HCT116 (cell line): ENCODE measurements at regions of chr9 and their contacts with region 1.

Region 1: DNA sequence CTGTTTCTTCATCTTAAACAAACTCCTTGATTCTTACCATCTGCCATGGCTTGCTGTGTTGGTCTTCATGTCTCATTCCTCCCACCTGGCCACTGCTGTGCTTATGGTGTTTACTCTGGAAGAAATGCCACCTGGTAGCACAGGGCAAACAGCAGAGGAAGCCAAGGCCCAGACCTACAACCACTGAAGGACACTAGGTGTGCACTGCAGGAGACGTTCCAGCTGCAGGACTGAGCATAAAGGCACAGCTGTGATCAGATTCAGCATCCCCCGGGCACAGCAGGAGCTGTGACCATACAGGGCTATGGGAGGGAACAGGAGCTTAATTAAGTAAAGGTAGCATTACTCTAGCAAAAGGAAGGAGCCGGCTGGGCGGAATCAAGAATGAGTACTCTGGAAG is 12.6 kb upstream of the GNAQ start:
- DNase-seq: no peak
- ATAC-seq: no peak
- H3K4me3 ChIP-seq: no peak overlapping the region
- H3K27ac ChIP-seq: no peak overlapping the region
- H3K4me1 ChIP-seq: no peaks in the 10 kb centered on the region
- H3K27me3 ChIP-seq: peaks cover 10% of the 10 kb centered on the region; the same call in 1 of the 2 replicates
- CTCF ChIP-seq: no peak
- POLR2A ChIP-seq: no peak
- RAD21 ChIP-seq: no peak

Region 2: DNA sequence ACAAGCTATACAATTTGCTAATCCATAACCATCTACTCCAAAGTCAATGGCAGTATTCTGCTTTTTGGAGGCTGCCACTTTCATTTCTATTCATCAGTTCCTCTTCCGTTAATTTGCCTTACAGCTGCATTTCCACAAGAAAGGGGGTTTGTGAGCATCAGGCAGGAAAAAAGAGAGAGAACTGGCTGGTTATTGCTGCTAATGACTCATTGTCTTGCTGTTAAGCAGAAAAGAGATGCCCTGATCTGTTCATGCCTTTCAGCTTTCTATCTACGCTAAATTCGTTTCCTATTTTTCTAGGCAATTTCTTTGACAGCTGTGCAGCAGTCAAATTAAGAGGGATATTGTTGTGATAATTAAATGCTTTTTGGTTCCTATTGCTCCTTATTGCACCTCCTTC is 53.4 kb after region 1 on chr9:
- CTCF ChIA-PET with region 1: no interaction called
- POLR2A ChIA-PET with region 1: no interaction called
- RAD21 ChIA-PET with region 1: no interaction called
- intact Hi-C with region 1: loop called (anchors 5 kb)
- DNase-seq: no peak
- ATAC-seq: no peak
- H3K4me3 ChIP-seq: no peak overlapping the region
- H3K27ac ChIP-seq: no peak overlapping the region
- H3K4me1 ChIP-seq: no peaks in the 10 kb centered on the region
- H3K27me3 ChIP-seq: no peaks in the 10 kb centered on the region
- CTCF ChIP-seq: no peak
- POLR2A ChIP-seq: no peak
- RAD21 ChIP-seq: no peak

Region 3: GRCh38 chr9:78235756-78236538 is 191.8 kb after region 1 on chr9 and contains the start of gene CEP78:
- CTCF ChIA-PET with region 1: no interaction called
- POLR2A ChIA-PET with region 1: no interaction called
- RAD21 ChIA-PET with region 1: no interaction called
- intact Hi-C with region 1: no loop called
- DNase-seq: peak; percentile 85
- ATAC-seq: peak; percentile 97
- H3K4me3 ChIP-seq: peak within 1 kb of the TSS; percentile 85 to 97
- H3K27ac ChIP-seq: peak within 1 kb of the TSS; percentile 89
- H3K4me1 ChIP-seq: peaks cover 2 to 12% of the 10 kb centered on the region in 2 experiments; a peak in 3 of 4 replicates
- H3K27me3 ChIP-seq: no peaks in the 10 kb centered on the region
- CTCF ChIP-seq: no peak
- POLR2A ChIP-seq: peak; percentile 95
- RAD21 ChIP-seq: no peak
- total RNA-seq, gene CEP78: 48.1 TPM